Activated B cell treated with CpG ODN at 0.5 μM for 24 hours (primary cell): ENCODE measurements at regions of chr2 and their contacts with region 1.

Region 1: DNA sequence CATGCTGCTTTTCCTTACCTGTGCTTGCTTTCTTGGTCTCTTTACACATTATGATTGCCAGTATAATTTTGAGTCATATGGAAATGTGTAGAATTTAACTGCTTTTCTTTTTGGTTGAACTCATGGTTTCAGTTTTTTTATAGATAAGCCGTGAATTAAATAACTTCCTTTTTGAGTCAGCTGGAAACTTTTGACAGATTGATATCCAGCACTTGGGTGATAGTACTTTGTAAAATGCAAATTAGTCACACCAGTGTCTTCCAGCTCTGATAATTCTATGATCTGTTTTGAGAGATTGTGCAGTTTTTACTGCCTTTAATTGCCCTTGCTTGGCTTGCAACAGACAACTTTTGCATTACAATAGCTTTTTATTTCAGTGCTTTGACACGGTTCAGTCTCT is 86.4 kb downstream of the NCOA1 start:
- DNase-seq: no peak
- ATAC-seq: peak; percentile 79
- H3K4me3 Mint-ChIP-seq: peak overlapping the region; percentile 68
- H3K27ac Mint-ChIP-seq: peak overlapping the region; percentile 77
- H3K4me1 Mint-ChIP-seq: peaks cover 69% of the 10 kb centered on the region
- H3K27me3 Mint-ChIP-seq: no peaks in the 10 kb centered on the region
- CTCF ChIP-seq: no peak

Region 2: GRCh38 chr2:24482251-24482971 is 95.1 kb before region 1 on chr2:
- CTCF ChIA-PET with region 1: no interaction called
- POLR2A ChIA-PET with region 1: no interaction called
- intact Hi-C with region 1: no loop called
- DNase-seq: no peak
- ATAC-seq: no peak
- H3K4me3 Mint-ChIP-seq: no peak overlapping the region
- H3K27ac Mint-ChIP-seq: no peak overlapping the region
- H3K4me1 Mint-ChIP-seq: no peaks in the 10 kb centered on the region
- H3K27me3 Mint-ChIP-seq: no peaks in the 10 kb centered on the region
- CTCF ChIP-seq: no peak

Region 3: DNA sequence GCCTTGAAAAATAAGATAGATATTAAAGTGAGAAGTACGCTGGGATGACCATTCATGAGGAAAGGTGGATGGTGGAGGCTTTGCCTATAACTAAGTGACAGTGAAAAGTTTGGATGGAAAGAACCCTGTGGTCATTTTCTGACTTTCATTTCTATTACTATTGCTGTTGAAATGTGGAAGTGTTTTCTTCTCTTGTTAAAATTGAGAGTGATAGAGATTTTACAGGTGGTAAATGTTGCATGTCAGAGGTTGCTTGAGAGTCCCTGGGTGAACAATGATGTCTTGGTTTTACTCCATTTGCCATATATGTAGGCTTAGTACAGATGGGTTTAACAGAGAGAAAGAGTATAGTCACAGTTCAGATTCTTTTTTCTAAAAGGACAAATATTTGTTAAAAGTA is 68.1 kb before region 1 on chr2:
- CTCF ChIA-PET with region 1: no interaction called
- POLR2A ChIA-PET with region 1: no interaction called
- intact Hi-C with region 1: loop called (anchors 5 kb)
- DNase-seq: no peak
- ATAC-seq: peak; percentile 93
- H3K4me3 Mint-ChIP-seq: peak overlapping the region; percentile 52
- H3K27ac Mint-ChIP-seq: peak overlapping the region; percentile 83
- H3K4me1 Mint-ChIP-seq: peaks cover 68% of the 10 kb centered on the region
- H3K27me3 Mint-ChIP-seq: no peaks in the 10 kb centered on the region
- CTCF ChIP-seq: no peak

Region 4: DNA sequence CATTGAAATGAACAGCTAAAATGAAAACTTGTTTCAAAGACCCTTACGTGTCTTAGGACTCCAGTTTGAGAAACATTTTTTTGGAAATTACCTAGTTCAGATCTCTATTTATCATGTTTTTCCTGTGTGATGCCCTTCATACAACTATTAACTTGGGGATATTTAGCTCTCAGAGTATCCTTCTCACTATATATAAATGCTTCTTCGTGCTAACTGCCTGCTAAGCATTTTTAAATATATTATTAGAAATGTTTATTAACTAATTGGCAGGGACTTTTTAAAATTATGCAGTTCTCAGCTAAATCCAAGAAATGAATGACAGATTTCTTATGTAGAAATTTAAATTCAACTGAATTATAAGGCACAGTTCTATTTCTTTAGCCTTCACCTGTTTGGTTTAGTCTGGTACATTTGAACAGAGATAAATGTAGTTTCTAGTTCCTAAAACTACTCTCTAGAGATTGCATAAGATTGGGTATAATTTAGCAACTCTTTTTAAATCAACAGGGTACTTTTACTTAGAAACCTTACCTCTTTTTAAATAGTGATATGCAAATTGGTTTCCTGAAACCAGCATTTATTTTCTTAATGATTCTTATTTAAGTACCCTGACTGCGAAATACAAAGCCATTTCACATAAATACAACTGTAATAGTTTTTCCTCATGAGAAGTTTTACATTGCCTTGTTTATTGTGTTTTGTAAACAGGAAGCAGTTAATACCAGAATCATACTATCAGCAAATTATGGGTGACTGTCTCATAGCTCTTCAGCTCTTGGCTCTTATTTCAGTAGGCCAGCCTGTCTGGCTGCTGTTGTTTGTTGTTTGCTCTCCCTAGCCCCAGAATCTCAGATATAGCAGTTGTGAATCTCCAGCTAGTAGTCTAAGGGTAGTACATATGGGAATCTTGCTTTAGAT is 75.0 kb after region 1 on chr2:
- CTCF ChIA-PET with region 1: no interaction called
- POLR2A ChIA-PET with region 1: no interaction called
- intact Hi-C with region 1: loop called (anchors 5 kb)
- DNase-seq: no peak
- ATAC-seq: peak; percentile 52
- H3K4me3 Mint-ChIP-seq: no peak overlapping the region
- H3K27ac Mint-ChIP-seq: peak overlapping the region; percentile 78
- H3K4me1 Mint-ChIP-seq: peaks cover 39% of the 10 kb centered on the region
- H3K27me3 Mint-ChIP-seq: no peaks in the 10 kb centered on the region
- CTCF ChIP-seq: no peak

Region 5: DNA sequence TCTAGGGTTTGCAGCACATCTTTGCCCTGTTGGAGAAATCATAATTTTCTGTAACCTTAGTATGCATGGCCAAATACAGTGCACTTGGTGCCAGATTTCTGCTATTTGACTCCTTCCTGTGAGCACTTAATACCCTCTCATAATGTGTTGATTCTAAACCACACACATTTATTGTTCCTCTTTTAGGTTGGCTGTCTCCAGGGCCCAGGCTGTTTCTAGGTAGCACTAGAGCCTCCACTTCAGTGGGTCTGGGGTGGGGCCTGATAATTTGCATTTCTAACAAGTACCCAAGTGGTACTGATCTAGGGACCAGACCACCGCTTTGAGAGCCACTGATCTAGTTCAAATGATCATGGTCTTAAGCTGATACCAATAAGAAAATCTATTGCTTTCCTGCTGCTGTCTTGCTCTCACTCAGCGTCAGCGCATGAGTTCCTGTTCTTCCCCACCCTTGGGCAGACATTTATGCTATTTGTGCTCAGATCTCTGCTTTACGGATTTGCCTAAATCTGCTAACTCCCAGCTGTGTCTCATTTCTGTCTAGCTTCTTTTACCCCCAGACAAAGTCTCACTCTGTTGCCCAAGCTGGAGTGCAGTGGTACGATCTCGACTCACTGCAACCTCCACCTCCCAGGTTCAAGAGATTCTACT is 208.3 kb after region 1 on chr2:
- CTCF ChIA-PET with region 1: no interaction called
- POLR2A ChIA-PET with region 1: no interaction called
- intact Hi-C with region 1: loop called (anchors 2 kb)
- DNase-seq: peak; percentile 47
- ATAC-seq: peak; percentile 95
- H3K4me3 Mint-ChIP-seq: peak overlapping the region; percentile 62
- H3K27ac Mint-ChIP-seq: peak overlapping the region; percentile 90
- H3K4me1 Mint-ChIP-seq: peaks cover 25% of the 10 kb centered on the region
- H3K27me3 Mint-ChIP-seq: peaks cover 6% of the 10 kb centered on the region
- CTCF ChIP-seq: no peak

Region 6: DNA sequence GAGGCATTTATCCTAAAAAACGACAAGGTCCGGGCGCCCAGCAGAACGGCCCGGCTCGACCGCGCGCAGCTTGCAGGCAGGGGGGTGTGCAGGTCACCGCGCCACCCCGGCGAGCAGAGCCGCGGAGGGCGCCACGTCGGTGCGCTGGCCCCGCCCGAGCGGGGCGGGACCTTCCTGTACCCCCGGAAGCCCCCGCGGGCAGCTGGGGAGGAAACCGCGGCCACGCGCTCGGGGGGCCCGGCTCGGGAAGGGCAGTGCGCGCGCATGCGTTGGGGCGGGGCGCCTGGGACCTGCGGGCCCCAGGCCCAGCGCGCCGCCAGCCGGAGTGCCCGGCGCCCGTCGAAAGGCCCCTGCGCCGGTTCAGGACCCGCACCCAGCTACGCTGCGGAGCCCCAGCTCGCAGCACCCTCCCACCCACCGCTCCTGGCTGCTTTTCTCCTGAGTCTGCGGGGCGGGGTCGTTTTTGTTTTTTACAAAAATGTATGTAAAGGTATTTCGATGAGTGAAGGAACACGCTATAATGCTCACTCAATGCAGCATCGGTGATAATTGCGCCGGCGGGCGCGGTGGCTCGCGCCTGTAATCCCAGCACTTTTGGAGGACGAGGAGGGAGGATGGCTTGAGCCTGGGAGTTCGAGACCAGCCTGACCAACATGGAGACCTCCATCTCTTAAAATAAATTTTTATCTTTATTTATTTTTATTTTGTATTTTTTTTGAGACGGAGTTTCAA is 638.6 kb after region 1 on chr2:
- CTCF ChIA-PET with region 1: no interaction called
- POLR2A ChIA-PET with region 1: no interaction called
- intact Hi-C with region 1: loop called (anchors 2 kb)
- DNase-seq: peak; percentile 85
- ATAC-seq: peak; percentile 94
- H3K4me3 Mint-ChIP-seq: peak overlapping the region; percentile 72
- H3K27ac Mint-ChIP-seq: peak overlapping the region; percentile 32
- H3K4me1 Mint-ChIP-seq: peaks cover 21% of the 10 kb centered on the region
- H3K27me3 Mint-ChIP-seq: no peaks in the 10 kb centered on the region
- CTCF ChIP-seq: no peak